ENCODE measurements at regions of chr5 and their contacts with region 1.

Region 1: DNA sequence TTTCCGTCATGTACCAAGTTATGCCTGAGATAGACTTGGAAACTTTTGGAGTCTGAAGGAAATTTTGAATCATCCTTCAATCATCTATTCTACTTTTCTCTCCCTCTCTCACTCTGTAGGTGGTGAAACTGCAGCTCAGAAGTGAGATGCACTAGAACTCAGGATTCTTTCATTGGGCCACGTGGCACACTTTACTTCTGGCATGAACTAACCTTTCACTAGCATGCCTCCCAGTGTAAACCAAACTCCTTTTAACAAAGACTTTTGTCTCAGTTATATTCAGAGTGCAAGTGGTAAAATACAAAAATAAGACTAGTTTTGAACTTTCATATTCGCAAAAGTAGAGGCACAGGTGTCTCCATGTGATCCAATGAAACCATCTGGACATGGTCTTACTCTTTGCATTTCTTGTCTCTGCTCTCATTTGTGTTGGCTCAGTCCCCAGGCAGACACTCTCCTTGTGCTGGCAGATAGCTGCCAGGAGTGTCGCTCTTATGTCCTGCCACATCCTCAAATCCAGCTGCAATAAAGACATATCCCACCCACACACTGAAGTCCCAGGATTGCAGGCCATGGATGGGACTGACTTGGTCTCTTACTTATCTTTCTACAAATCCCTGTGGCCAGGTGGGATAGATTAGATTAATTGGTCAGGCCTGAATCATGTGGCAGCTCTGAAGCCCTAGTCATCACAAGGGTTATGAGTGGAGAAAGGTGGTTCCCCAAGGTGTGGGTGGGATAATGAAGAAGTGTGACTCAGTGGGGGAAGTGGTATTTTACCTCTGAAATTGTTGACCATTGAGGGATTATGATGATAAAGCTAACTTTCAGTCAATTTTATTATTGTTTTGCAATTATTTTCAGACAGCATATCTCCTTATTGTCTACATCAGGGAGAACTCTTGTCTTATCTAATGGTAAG is 267.5 kb downstream of the GABRB2 start:
- DNase-seq: no peak
- ATAC-seq: no peak
- H3K4me3 ChIP-seq: no peak overlapping the region
- H3K27ac ChIP-seq: no peak overlapping the region
- H3K4me1 ChIP-seq: no peaks in the 10 kb centered on the region
- H3K27me3 ChIP-seq: no peaks in the 10 kb centered on the region
- CTCF ChIP-seq: no peak

Region 2: GRCh38 chr5:161042443-161042842 is 236.6 kb before region 1 on chr5:
- intact Hi-C with region 1: loop called in 1 of 2 experiments (anchors 10 kb)
- DNase-seq: no peak
- ATAC-seq: no peak
- H3K4me3 ChIP-seq: no peak overlapping the region
- H3K27ac ChIP-seq: no peak overlapping the region
- H3K4me1 ChIP-seq: no peaks in the 10 kb centered on the region
- H3K27me3 ChIP-seq: no peaks in the 10 kb centered on the region
- CTCF ChIP-seq: no peak

Measured in psoas muscle (tissue), 8 donors.